Dorsolateral prefrontal cortex (tissue), 120 donors: ENCODE measurements at regions of chr7 and their contacts with region 1.

Region 1: DNA sequence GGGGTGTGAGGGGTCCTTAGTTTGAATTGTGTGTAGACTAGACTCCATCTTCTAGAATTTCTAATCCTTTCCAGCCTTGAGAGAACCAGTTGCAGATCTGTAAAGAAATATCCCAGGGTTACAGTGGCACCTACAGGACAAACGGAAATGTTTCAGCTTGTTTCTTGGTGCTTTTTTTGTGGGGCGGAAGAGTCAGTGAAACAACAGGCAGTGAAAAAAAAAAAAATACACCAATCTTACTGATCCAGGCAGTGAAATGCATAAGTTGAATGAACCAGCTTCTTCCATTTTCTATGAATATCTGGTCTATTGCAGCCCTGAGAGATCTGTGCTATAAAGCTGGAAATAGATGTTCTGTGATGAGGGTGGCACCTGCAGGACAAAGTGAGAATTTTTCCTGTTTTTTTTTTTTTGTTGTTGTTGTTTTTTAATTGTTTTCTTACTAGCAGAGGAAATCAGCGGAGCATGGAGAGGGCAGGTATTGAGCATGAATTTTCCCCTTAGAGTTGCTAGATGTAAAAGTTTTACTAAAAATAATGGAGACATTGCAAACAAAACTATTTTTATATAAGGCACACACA is 81.9 kb upstream of the DYNC1I1 start:
- DNase-seq: no peak
- H3K4me3 ChIP-seq: peak overlapping the region in 35 of 59 donors; percentile 6 to 57 (median 32)
- H3K27ac ChIP-seq: peak overlapping the region in 42 of 59 donors; percentile 1 to 89 (median 51)
- H3K27me3 ChIP-seq: peaks cover 0 to 3% (median 0%) of the 10 kb centered on the region in 45 donors
- CTCF ChIP-seq: peak; percentile 51 to 87 (median 77)

Region 2: DNA sequence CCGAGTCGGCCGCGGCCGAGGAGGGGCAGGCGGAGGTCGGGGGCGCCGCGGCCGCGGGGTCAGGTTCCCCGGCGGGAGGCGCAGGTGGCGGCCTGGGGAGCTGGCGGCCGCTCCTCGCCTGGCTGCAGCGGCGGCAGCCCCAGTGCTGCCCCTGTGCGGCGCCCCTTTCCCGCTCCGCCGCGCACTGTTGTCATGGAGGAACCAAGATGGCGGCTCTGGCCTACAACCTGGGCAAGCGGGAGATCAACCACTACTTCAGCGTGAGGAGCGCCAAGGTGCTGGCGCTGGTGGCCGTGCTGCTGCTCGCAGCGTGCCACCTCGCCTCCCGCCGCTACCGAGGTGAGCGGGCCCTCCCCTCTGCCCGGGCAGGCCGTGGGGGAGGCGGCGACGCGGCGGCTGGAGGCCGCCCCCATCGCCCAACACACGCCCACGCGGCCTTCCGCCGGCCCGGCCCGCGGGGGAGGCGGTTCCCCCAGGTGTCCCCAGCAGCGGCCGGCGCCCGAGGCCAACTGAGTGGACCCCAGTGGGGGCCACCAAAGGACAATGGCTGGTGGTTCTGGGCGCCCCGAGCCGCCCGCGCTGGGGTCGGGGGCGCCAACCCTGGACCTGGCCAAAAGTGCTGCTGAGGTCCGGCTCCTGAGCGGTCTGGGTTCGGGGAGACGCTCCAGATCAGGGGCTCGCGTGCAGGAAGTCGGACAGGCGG is 1180.4 kb before region 1 on chr7:
- intact Hi-C with region 1: loop called in 1 of 2 experiments (anchors 5 kb)
- DNase-seq: peak; percentile 51 to 80 (median 62)
- H3K4me3 ChIP-seq: peak overlapping the region; percentile 66 to 97 (median 88)
- H3K27ac ChIP-seq: peak overlapping the region; percentile 84 to 99 (median 96)
- H3K27me3 ChIP-seq: no peaks in the 10 kb centered on the region
- CTCF ChIP-seq: peak in 44 of 56 donors; percentile 7 to 65 (median 33)

Region 3: GRCh38 chr7:95357623-95358022 is 332.8 kb before region 1 on chr7:
- intact Hi-C with region 1: loop called in 1 of 2 experiments (anchors 5 kb)
- DNase-seq: no peak
- H3K4me3 ChIP-seq: no peak overlapping the region
- H3K27ac ChIP-seq: no peak overlapping the region
- H3K27me3 ChIP-seq: peaks cover 0 to 3% (median 0%) of the 10 kb centered on the region in 45 donors
- CTCF ChIP-seq: peak in 53 of 56 donors; percentile 13 to 70 (median 47)

Region 4: DNA sequence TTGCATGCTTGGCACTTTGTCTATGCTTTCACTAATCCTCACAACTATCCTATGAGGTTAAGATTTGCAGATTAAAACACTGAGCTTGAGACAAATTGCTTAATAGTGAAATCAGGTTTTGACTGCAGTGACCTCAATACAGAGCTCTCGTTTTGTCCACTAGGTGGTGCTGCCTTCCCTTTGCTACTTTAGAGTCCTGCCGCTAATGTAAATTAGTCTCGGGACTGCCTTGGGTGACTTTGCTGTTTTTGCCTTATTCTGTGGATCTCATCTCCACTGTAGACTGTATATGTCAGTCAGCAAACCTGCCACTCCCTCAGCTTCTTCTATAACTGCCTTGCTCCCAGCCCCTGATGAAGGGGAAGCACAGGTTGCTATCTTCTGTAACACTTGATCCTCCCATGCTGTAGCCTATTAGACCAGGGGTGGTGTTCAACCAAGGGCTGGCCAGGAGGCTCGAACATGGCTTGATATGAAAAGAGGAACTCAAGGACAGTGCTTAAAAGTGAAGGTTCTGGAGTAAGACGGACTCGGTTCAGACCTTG is 178.7 kb before region 1 on chr7:
- intact Hi-C with region 1: loop called (anchors 5 kb)
- DNase-seq: peak; percentile 30 to 91 (median 64)
- H3K4me3 ChIP-seq: peak overlapping the region in 6 of 59 donors; percentile 1 to 13 (median 10)
- H3K27ac ChIP-seq: peak overlapping the region in 57 of 59 donors; percentile 25 to 94 (median 81)
- H3K27me3 ChIP-seq: no peaks in the 10 kb centered on the region
- CTCF ChIP-seq: peak; percentile 74 to 97 (median 92)